ENCODE measurements at regions of chr1 and their contacts with region 1.

Region 1: DNA sequence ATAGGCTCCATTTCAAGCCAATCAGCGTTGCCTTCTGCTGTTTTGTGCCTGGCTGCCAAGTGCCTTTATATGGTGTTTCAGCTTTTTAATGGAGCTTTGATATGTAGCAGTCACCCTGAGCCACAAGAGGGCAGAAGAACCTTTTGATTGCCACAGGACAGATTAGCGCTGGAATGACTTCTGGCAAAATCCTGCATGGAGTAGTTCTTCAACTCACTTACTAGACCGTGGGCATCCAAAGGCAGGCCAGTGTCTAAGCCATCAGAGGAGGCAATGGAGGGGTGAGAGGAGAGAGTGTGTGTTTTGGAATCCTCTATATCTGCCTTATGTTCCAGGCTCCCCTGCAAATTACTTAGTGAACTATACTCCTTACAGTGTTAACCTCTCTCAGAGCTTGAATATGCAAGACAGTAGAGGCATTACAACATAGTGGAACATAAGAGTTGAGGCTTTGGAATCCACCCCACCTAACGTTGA is 56.2 kb downstream of the ST3GAL3 start:
- DNase-seq: peak; percentile 61
- CTCF ChIP-seq: peak; percentile 86

Region 2: GRCh38 chr1:43582162-43582589 is 181.4 kb before region 1 on chr1:
- CTCF ChIA-PET with region 1: no interaction called
- POLR2A ChIA-PET with region 1: no interaction called
- DNase-seq: peak; percentile 78
- CTCF ChIP-seq: no peak

Region 3: DNA sequence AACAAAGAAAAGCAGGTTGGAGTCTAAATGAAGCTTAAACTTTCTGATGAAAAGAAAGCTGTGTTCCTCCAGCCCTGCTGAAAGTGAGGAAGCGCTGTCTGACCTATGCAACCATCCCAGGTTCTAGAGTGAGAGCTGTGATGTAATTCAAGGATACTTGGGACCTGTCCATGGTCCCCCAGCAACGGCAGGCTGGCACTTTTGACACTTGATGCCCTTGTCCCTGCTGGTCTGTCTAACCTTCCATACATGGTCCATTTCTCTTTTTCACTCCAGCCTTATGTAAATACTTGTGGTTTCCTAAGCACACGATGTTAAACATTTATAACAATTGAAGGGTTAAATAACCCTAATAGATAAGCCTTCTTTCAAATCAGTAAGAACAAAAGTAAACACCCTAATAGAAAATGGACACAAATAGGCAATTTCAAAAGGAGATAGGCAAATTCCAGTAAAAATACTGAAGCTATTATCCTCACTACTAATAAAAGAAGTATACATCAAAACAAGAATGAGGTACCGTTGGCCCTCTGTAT is 131.3 kb before region 1 on chr1:
- CTCF ChIA-PET with region 1: no interaction called
- POLR2A ChIA-PET with region 1: no interaction called
- DNase-seq: no peak
- CTCF ChIP-seq: no peak

Region 4: DNA sequence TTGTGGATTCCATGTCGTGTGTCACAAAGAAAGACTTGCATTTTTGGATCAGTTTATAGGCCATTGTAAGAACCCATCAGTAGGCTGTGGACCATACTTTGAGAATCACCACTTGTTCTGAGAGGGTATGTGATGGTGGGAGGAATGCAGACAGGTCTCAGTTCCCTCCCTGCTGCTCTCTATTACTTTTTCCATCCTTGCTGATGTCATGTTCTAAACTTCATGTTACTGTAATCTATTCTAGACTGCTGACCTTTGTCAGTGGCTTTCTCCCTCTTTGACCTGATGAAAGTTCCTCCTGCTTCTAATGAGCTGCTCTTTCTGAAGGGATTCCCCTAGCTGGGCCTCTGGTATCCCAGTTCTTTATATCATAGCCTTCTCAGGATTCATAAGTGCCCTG is 10.1 kb before region 1 on chr1:
- CTCF ChIA-PET with region 1: interaction called, 31 read pairs
- POLR2A ChIA-PET with region 1: no interaction called
- DNase-seq: peak; percentile 39
- CTCF ChIP-seq: no peak

Region 5: DNA sequence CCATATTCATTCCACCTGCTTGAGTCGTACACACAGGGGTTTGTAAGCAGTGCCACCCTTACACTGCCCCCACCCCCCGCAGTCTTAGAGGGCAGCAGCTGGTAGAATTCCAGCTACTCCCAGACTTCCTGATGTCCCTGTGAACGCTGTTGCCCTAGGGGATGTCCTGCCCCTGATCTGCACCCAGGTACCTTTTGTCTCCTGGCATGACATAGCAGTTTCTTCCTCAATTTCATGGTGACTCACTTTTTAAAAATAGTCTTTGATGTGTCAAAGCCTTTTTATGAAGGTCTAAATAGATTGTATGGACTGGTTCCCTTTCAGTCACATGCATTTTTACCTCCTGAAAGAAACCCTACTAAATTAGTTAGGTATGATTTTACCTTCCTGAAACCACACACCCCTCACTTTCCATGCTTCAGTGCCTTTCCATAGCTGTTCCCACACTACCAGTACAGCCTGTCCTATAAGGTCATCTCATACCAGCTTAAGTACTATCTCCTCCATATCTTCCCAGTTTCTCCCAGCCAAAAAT is 20.2 kb after region 1 on chr1:
- CTCF ChIA-PET with region 1: interaction called, 39 read pairs
- POLR2A ChIA-PET with region 1: interaction called, 3 read pairs
- DNase-seq: peak; percentile 44
- CTCF ChIP-seq: no peak

Region 6: GRCh38 chr1:43912607-43913006 is 149.1 kb after region 1 on chr1:
- CTCF ChIA-PET with region 1: interaction called, 16 read pairs
- POLR2A ChIA-PET with region 1: no interaction called
- DNase-seq: no peak
- CTCF ChIP-seq: no peak

Region 7: GRCh38 chr1:43946236-43947060 is 182.9 kb after region 1 on chr1 and contains the start of gene IPO13:
- CTCF ChIA-PET with region 1: interaction called, 526 read pairs
- POLR2A ChIA-PET with region 1: no interaction called
- DNase-seq: peak; percentile 99
- CTCF ChIP-seq: peak; percentile 92

Region 8: GRCh38 chr1:44036409-44037139 is 273.0 kb after region 1 on chr1:
- CTCF ChIA-PET with region 1: interaction called, 18 read pairs
- POLR2A ChIA-PET with region 1: no interaction called
- DNase-seq: peak; percentile 71
- CTCF ChIP-seq: peak; percentile 92